Naive thymus-derived CD8-positive, alpha-beta T cell (primary cell): ENCODE measurements at regions of chr6 and their contacts with region 1.

Region 1: DNA sequence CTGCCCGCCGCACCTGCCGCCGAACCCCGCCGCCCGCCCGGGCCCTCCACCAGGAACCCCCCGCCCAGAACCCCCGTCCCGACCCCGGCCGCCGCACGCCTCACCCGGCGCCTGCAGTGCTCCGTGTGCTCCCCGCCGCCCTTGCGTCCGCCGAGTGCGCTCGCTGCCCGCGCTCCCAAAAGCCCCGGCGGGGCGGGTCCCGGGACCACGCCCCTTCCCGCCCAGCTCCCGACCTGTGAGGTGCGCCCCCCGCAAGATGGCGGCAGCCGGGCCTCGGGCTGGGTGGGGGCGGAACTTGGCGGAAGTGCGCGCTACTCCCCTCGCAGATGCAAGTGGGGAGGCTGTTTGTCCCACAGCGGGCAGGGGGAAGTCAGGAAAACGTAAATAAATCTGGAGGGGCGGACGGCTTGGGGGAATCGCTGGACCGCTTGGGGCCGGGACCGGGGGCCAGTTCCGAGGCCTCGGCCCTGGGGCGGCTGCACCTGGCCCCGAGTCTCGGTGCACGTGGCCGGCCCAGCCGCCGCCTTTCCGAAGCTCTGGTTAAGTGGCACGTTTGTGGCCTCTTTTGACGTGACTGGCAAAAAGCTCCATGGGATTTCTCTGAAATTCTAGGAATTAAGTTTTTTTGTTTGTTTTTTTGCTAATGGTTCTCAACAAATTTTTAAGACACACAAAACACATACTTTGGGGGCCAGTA is at the start of gene EZR:
- DNase-seq: peak; percentile 77 to 94 (median 84)
- ATAC-seq: peak; percentile 59 to 66
- H3K4me3 Mint-ChIP-seq: peak within 1 kb of the TSS; percentile 72 to 98 (median 88)
- H3K27ac Mint-ChIP-seq: peak within 1 kb of the TSS; percentile 77 to 99 (median 97)
- H3K4me1 Mint-ChIP-seq: peaks cover 22 to 50% (median 39%) of the 10 kb centered on the region in 4 donors
- H3K27me3 Mint-ChIP-seq: no peaks in the 10 kb centered on the region
- polyA plus RNA-seq, gene EZR: 127 to 168 (median 143) TPM

Region 2: GRCh38 chr6:158793432-158793831 is 25.9 kb before region 1 on chr6:
- POLR2A ChIA-PET with region 1: interaction called, 14 read pairs
- DNase-seq: peak in 1 of 10 donors; percentile 45
- ATAC-seq: peak; percentile 16 to 17
- H3K4me3 Mint-ChIP-seq: peak overlapping the region in 3 of 10 donors; percentile 20 to 37 (median 28)
- H3K27ac Mint-ChIP-seq: peak overlapping the region in 5 of 10 donors; percentile 53 to 90 (median 72)
- H3K4me1 Mint-ChIP-seq: peaks cover 38 to 90% (median 78%) of the 10 kb centered on the region in 4 donors
- H3K27me3 Mint-ChIP-seq: no peaks in the 10 kb centered on the region

Region 3: DNA sequence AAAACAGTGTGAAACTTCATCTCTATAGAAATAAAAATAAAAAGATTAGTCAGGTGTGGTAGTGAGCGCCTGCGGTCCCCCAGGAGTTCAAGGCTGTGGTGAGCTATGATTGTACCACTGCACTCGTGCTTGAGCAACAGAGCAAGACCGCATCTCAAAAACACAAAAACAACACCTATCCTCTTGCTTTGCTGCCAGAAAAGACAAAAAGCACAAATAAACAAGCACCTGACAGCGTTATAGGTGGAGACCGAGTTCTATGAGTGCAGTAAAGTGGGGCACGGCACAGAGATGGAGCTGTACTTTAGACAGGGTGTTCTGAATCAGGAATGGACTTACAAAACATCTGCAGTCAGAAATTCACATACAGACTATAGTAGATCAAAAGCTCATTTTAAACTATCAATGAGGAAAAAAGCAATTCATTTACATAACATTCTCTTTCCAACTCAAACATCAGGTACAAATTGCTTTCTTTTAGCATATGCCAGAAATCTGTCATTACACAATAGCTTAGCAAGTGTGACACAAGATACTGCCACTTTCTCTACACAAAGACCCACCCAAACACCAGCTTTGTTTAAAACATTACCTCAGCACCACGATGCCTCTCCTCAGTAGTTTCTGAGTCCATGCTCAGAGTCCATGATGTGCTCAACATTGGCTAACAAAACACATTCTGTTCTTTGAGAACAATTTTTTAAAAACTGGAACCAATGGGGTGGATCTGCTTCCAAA is 10.3 kb before region 1 on chr6:
- POLR2A ChIA-PET with region 1: interaction called, 21 read pairs
- DNase-seq: peak in 5 of 10 donors; percentile 48 to 76 (median 54)
- ATAC-seq: peak; percentile 62 to 72
- H3K4me3 Mint-ChIP-seq: peak overlapping the region in 9 of 10 donors; percentile 41 to 76 (median 63)
- H3K27ac Mint-ChIP-seq: peak overlapping the region; percentile 67 to 97 (median 85)
- H3K4me1 Mint-ChIP-seq: peaks cover 52 to 98% (median 96%) of the 10 kb centered on the region in 4 donors
- H3K27me3 Mint-ChIP-seq: no peaks in the 10 kb centered on the region

Region 4: DNA sequence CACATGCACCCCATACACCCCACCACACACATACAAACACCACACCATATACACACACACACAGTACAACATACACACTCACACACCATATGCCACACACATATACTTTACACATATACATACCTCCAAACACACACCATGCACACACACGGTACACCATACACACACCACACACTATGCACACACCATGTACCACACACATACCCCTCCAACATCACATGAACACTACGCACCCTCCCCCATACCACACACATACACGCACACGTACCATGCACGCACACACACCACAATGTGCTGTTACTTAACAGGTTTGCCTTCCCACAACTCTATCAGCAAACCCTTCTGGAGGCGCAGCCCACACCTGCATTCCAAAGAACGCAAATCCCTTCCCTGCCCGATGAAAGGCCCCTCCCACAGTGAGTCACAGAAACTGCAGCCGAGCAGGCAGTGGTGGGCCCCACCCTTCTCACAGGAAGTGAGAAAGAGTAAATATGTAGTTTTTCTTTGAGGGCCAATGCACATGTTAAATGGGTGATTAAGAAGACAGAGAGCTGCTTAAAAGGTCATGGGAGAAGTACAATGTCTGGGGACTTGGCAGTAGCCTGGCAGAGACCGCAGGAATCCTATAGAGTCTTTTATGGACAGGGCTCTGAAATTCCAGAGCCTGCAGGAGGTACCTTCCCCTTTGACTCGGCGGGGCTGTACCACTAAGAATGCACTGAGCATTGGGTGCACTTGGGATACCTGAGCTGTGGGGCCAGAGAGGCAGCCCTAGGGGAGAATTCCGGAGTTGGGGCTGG is 33.9 kb after region 1 on chr6:
- POLR2A ChIA-PET with region 1: interaction called, 51 read pairs
- DNase-seq: peak; percentile 61 to 95 (median 83)
- ATAC-seq: peak; percentile 61 to 70
- H3K4me3 Mint-ChIP-seq: no peak overlapping the region
- H3K27ac Mint-ChIP-seq: no peak overlapping the region
- H3K4me1 Mint-ChIP-seq: peaks cover 13 to 44% (median 32%) of the 10 kb centered on the region in 4 donors
- H3K27me3 Mint-ChIP-seq: no peaks in the 10 kb centered on the region

Region 5: DNA sequence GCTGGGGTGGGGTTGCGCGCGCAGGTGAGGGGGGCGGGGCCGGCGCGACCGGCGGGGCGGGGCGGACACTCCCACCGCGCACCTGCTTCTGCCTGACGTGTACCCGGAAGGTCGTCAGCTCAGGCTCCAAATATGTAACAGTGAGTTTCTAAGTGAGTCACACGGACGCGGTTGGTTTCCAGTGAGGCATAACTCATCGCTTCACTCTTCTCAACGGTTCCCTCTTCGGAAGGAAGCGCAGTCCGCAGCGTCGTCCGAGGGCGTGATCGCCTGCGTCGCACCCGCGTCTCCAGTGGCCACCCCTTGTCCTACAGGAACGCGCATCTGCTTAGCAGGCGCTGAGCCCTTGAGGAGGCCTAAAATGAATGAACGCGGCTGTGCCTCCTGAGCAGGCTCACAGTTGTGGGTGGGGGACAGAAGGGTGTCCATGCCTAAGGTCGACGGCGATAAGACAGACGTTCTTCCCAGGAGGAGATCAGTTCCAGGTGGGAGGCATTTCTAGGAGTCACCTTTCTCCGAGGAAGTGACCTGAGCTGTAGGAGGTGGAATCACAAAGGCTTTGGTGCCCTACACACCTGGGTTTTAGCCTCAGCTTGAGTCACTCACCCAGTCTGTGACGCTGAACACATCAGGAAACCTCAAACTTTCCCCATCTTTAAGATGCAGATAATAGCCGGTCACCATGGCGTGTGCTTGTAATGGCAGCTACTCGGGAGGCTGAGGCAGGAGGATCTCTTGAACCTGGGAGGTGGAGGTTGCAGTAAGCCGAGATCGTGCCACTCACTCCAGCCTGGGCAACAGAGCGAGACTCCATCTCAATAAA is 50.7 kb after region 1 on chr6:
- POLR2A ChIA-PET with region 1: interaction called, 89 read pairs
- DNase-seq: peak in 3 of 10 donors; percentile 85 to 97 (median 97)
- ATAC-seq: peak; percentile 82 to 83
- H3K4me3 Mint-ChIP-seq: peak overlapping the region; percentile 83 to 96 (median 92)
- H3K27ac Mint-ChIP-seq: peak overlapping the region; percentile 95 to 100 (median 100)
- H3K4me1 Mint-ChIP-seq: peaks cover 6 to 58% (median 30%) of the 10 kb centered on the region in 4 donors
- H3K27me3 Mint-ChIP-seq: no peaks in the 10 kb centered on the region